Dorsolateral prefrontal cortex (tissue), 120 donors: ENCODE measurements at regions of chr5 and their contacts with region 1.

Region 1: GRCh38 chr5:56807679-56808078 is 7.7 kb upstream of the MAP3K1 start:
- DNase-seq: no peak
- H3K4me3 ChIP-seq: no peak overlapping the region
- H3K27ac ChIP-seq: no peak overlapping the region
- H3K27me3 ChIP-seq: no peaks in the 10 kb centered on the region
- CTCF ChIP-seq: no peak

Region 2: DNA sequence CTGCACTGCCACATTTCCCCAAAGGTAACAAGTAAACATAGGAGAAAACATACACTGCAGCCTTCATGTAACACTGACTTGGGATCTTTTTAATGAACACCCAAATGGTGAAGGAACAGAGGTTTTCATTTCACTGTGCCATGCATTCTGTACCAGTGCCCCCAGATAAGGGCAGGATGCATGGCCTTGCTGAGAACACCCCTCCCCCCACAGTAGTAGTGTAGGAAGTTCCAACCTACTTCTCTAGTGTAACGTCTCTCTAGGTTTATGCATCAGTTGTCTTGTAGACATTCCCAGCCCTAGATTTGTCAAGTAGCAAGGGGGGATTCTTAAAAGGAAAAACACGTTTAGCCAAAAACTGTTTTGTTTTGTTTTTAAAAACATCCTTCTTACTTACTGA is 37.6 kb after region 1 on chr5:
- intact Hi-C with region 1: loop called in 1 of 2 experiments (anchors 5 kb)
- DNase-seq: no peak
- H3K4me3 ChIP-seq: no peak overlapping the region
- H3K27ac ChIP-seq: no peak overlapping the region
- H3K27me3 ChIP-seq: no peaks in the 10 kb centered on the region
- CTCF ChIP-seq: no peak